Colonic mucosa (tissue), 4 donors: ENCODE measurements at regions of chr3 and their contacts with region 1.

Region 1: DNA sequence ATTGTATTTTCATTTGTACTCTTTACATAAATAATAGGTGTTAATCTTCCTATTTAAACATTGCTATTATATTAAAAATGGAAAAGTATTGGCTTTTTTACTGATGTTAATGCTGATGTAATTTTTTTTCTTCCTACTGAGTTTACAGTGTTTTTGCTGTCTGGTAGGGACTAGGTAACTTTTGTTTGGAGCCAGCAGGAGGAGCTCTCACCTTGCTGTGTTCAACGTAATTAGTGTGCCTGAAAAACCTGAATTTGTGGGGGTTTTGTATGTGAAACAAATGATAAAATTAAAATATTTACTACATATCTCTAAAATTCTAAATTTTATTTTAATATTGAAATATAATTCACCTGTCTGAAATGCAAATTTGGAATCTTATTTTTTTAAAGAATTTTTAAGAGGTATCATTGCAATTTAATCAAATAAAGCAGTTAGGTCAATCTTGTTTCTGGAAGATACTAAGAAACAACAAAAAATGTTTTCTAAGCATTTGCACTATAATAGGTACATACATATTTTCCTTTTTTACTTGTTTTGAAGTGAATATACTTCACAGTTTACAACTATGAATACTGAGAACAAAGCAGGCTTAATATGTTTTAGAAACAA is 48.8 kb downstream of the EPHA6 start:
- DNase-seq: peak; percentile 18
- H3K4me3 ChIP-seq: no peak overlapping the region
- H3K27ac ChIP-seq: no peak overlapping the region
- H3K4me1 ChIP-seq: no peaks in the 10 kb centered on the region
- H3K27me3 ChIP-seq: no peaks in the 10 kb centered on the region
- CTCF ChIP-seq: peak; percentile 49

Region 2: GRCh38 chr3:96666073-96666472 is 197.2 kb before region 1 on chr3:
- intact Hi-C with region 1: no loop called
- DNase-seq: no peak
- H3K4me3 ChIP-seq: no peak overlapping the region
- H3K27ac ChIP-seq: no peak overlapping the region
- H3K4me1 ChIP-seq: no peaks in the 10 kb centered on the region
- H3K27me3 ChIP-seq: no peaks in the 10 kb centered on the region
- CTCF ChIP-seq: no peak

Region 3: GRCh38 chr3:97658668-97659285 is 795.5 kb after region 1 on chr3:
- intact Hi-C with region 1: loop called (anchors 5 kb)
- DNase-seq: no peak
- H3K4me3 ChIP-seq: no peak overlapping the region
- H3K27ac ChIP-seq: no peak overlapping the region
- H3K4me1 ChIP-seq: no peaks in the 10 kb centered on the region
- H3K27me3 ChIP-seq: no peaks in the 10 kb centered on the region
- CTCF ChIP-seq: peak; percentile 52

Region 4: DNA sequence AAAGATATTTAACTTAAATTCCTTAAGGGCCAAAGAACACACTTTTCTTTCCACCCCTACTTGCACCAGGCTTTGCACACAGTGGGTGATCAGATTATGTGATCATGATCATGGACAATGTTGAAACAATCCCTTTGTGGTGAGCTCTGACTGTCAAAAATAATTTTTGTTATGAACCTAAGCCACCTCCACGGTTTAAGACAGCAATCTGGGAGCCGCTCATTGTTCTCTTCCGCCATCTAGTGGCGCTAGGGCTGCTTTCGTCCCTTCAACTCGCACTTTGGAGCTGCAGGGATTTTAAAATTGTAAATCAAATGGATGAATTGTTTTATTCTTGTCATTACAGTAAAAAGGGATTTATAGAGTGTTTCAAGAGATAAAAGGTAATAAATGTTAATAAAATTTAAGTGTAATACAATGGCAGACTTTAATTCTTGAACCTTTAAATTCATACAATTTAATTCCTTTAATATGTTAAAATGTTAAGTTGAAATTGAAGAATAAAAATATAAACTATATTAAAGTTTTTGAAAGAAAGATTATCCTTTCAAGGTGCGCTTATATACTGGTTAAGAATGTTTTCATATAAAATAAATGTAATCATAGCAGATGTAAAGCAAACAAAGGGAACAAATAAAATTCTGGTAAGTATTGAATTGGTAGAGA is 856.1 kb after region 1 on chr3:
- intact Hi-C with region 1: loop called (anchors 5 kb)
- DNase-seq: peak; percentile 53
- H3K4me3 ChIP-seq: no peak overlapping the region
- H3K27ac ChIP-seq: no peak overlapping the region
- H3K4me1 ChIP-seq: no peaks in the 10 kb centered on the region
- H3K27me3 ChIP-seq: no peaks in the 10 kb centered on the region
- CTCF ChIP-seq: peak; percentile 79

Region 5: DNA sequence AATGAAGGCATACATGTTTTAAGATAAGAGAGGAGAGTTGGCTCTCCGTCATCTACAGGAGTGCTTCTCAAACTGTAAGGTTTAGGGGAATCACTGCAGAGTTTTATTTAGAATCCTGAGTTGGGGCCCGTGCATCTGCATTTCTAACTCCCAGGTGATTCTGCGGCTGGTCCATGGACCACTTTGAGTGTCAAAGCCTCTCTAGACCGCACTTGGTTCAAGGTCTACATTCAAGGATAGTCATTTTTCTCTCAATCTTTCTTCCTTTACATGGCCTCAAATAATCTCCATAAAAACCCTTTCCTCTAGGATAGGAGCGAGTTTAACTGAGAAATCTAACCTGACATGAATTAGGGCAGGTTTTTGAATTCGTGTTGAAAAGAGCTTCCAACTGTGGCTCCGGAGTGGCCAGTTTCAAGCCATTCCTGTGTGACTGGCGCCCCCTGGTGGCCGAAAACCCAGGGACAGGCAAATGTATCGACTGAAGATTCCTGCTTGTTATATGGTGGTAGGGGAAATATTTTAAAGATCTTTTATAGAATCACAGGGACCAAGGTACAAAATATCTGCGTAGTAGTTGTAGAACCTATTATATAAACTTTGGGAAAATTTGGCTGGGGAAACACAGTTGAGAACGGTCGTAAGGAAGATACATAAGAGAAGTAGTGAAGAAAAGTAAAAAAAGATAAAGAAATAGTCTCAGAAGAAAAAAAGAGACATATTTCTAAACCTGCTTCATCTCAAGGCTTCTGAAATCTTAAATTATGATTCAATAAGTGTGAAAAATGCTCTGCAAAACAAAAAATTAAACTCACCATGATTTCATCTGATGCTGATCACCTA is 1160.0 kb after region 1 on chr3:
- intact Hi-C with region 1: loop called (anchors 10 kb)
- DNase-seq: peak; percentile 92
- H3K4me3 ChIP-seq: no peak overlapping the region
- H3K27ac ChIP-seq: no peak overlapping the region
- H3K4me1 ChIP-seq: no peaks in the 10 kb centered on the region
- H3K27me3 ChIP-seq: no peaks in the 10 kb centered on the region
- CTCF ChIP-seq: peak; percentile 97